ENCODE measurements at regions of chr12 and their contacts with region 1.

Region 1: DNA sequence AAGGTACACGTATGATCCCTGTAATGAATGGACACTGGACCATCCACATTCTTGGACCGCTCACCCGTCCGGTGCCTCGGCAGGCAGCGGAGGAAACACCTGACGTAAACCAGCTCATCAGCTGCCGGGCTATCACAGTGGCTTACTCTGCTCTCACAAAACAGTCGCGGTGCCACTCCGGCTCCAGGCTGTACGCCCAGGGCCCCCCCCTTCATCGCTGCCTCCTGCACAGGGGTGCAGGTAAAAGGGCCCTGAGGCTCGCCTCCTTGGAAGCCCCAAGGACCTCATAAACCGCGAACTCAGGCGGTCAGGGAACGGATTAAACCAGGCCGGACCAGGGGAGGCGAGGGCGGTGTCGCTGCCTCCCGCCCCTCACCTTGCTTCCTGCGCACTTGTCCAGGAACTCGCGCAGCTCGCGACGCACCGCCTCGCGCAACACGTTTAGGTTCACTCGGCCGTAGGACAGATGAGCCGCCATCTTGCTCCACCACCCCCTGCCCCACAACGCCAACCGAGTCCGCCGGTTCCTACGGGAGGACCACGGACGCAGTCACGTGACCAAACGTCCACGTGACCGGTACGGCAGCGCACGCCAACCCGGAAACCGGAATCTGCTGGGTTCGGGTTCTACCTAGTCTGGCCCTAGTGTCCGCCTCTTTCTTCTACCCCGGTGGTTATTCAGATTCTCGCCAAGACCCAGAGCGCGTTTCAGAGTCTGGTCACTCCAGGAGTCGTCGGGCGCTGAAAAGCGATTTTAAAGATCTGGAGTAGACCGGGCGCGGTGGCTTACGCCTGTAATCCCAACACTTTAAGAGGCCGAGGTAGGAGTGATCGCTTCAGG is at the start of gene VPS33A:
- DNase-seq: peak; percentile 85 to 97 (median 88)
- ATAC-seq: peak; percentile 68
- H3K4me3 ChIP-seq: peak within 1 kb of the TSS; percentile 85
- H3K4me3 Mint-ChIP-seq: peak within 1 kb of the TSS; percentile 100
- H3K27ac ChIP-seq: peak within 1 kb of the TSS; percentile 94 to 97
- H3K27ac Mint-ChIP-seq: peak within 1 kb of the TSS; percentile 99
- H3K4me1 ChIP-seq: peaks cover 25% of the 10 kb centered on the region
- H3K4me1 Mint-ChIP-seq: peaks cover 33% of the 10 kb centered on the region
- H3K27me3 ChIP-seq: no peaks in the 10 kb centered on the region
- H3K27me3 Mint-ChIP-seq: peaks cover 8% of the 10 kb centered on the region
- CTCF ChIP-seq: no peak
- total RNA-seq, gene VPS33A: 12.0 to 14.2 TPM

Region 2: GRCh38 chr12:121600702-121601336 is 665.3 kb before region 1 on chr12:
- CTCF ChIA-PET with region 1: no interaction called
- POLR2A ChIA-PET with region 1: no interaction called
- intact Hi-C with region 1: no loop called
- DNase-seq: no peak
- ATAC-seq: no peak
- H3K4me3 ChIP-seq: no peak overlapping the region
- H3K4me3 Mint-ChIP-seq: no peak overlapping the region
- H3K27ac ChIP-seq: no peak overlapping the region
- H3K27ac Mint-ChIP-seq: no peak overlapping the region
- H3K4me1 ChIP-seq: no peaks in the 10 kb centered on the region
- H3K4me1 Mint-ChIP-seq: peaks cover 8% of the 10 kb centered on the region
- H3K27me3 ChIP-seq: no peaks in the 10 kb centered on the region
- H3K27me3 Mint-ChIP-seq: no peaks in the 10 kb centered on the region
- CTCF ChIP-seq: no peak

Region 3: DNA sequence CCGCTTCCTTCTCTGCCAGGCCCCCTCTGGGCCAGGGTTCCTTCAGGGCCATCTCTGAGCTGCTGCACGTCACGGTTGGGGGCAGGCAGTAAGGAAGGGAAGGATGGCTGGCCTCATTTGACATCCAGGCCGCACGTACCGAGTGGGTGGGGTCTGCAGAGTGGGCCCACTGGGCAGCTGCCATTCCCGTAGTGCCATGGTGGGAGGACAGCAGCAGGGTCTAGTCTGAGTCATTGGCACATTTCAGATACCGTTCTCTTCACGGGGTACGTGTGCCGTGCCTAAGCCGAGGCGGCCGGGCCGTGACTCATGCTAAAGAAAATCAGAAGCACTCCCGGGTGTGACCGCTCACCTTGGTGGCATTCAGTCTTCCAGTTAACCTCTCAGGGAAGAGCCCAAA is 136.0 kb before region 1 on chr12:
- CTCF ChIA-PET with region 1: no interaction called
- POLR2A ChIA-PET with region 1: no interaction called
- intact Hi-C with region 1: loop called (anchors 5 kb)
- DNase-seq: no peak
- ATAC-seq: no peak
- H3K4me3 ChIP-seq: no peak overlapping the region
- H3K4me3 Mint-ChIP-seq: no peak overlapping the region
- H3K27ac ChIP-seq: no peak overlapping the region
- H3K27ac Mint-ChIP-seq: no peak overlapping the region
- H3K4me1 ChIP-seq: no peaks in the 10 kb centered on the region
- H3K4me1 Mint-ChIP-seq: peaks cover 12% of the 10 kb centered on the region
- H3K27me3 ChIP-seq: no peaks in the 10 kb centered on the region
- H3K27me3 Mint-ChIP-seq: no peaks in the 10 kb centered on the region
- CTCF ChIP-seq: no peak

Region 4: DNA sequence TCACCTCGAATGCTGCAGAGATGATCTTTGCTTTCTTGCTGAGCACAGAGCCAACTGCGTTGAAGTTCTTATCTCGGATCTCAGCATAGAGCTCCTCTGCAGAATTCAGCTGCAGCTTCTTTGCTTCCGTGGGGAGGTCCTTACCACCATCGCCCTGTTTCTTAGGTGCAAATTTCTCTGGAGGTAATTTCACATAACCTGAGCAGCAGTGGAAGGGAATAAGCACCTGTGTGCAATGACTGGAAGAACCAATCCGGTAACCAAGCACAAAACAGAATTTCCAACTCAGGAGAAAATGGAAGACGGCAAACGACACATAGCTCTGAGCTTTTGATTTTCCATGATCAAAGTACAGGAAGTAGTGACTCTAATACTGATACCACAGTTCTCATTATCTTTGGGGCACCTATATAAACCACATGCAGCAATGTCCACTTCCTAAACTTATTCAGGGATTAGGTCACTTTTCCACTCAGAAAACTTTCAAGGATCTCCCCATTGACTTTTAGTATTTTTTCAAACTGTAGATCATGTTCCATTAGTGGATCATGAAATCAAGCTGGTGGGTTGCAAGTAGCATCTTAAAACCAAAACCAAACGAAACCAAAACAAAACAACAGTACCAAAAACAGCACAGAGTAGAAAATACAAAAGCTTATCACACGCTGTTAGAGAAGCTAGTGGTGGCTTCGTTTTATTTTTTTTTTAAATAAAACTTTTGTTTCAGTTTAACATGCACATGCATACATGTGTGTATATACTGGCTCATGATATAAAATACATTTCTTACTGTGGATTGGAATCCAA is 21.4 kb before region 1 on chr12:
- CTCF ChIA-PET with region 1: interaction called, 8 read pairs
- POLR2A ChIA-PET with region 1: interaction called, 68 read pairs
- intact Hi-C with region 1: loop called in 1 of 2 experiments (anchors 2 kb)
- DNase-seq: peak in 6 of 14 experiments; percentile 5 to 79 (median 42)
- ATAC-seq: peak; percentile 81
- H3K4me3 ChIP-seq: peak overlapping the region; percentile 54
- H3K4me3 Mint-ChIP-seq: peak overlapping the region; percentile 87
- H3K27ac ChIP-seq: peak overlapping the region; percentile 44 to 52
- H3K27ac Mint-ChIP-seq: peak overlapping the region; percentile 88
- H3K4me1 ChIP-seq: peaks cover 36% of the 10 kb centered on the region
- H3K4me1 Mint-ChIP-seq: peaks cover 31% of the 10 kb centered on the region
- H3K27me3 ChIP-seq: no peaks in the 10 kb centered on the region
- H3K27me3 Mint-ChIP-seq: no peaks in the 10 kb centered on the region
- CTCF ChIP-seq: no peak

Measured in CD4-positive, alpha-beta T cell (primary cell).